Heart right ventricle (tissue), 16 donors: ENCODE measurements at regions of chrX and their contacts with region 1.

Region 1: GRCh38 chrX:140918407-140919038 is 83.9 kb upstream of the SPANXB1 start:
- DNase-seq: peak in 1 of 2 donors; percentile 4
- ATAC-seq: no peak
- H3K4me3 ChIP-seq: no peak overlapping the region
- H3K27ac ChIP-seq: no peak overlapping the region
- H3K4me1 ChIP-seq: no peaks in the 10 kb centered on the region
- H3K27me3 ChIP-seq: no peaks in the 10 kb centered on the region
- CTCF ChIP-seq: peak in 7 of 9 donors; percentile 41 to 56 (median 46)

Region 2: GRCh38 chrX:140672895-140673731 is 245.4 kb before region 1 on chrX:
- intact Hi-C with region 1: no loop called
- DNase-seq: no peak
- ATAC-seq: no peak
- H3K4me3 ChIP-seq: no peak overlapping the region
- H3K27ac ChIP-seq: no peak overlapping the region
- H3K4me1 ChIP-seq: no peaks in the 10 kb centered on the region
- H3K27me3 ChIP-seq: peaks cover 0 to 10% (median 0%) of the 10 kb centered on the region in 7 donors
- CTCF ChIP-seq: no peak

Region 3: DNA sequence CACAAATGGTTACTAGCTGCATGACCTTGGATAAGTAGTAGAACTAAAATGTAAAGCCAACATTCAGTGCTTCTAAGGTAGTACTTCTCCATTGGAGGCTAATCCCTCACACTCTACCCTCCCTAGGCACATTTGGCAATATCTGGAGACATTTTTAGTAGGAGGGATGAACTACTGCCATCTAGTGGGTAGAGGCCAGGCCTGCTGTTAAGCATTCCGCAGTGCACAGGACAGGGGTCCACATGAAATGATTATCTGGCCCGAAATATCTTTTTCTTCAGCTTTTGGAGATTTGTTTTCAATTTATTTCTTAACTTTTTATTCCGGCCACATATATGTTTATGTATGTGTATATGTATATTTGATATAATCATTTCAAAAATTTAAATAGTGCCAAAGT is 359.8 kb after region 1 on chrX:
- intact Hi-C with region 1: loop called in 1 of 10 experiments (anchors 5 kb)
- DNase-seq: no peak
- ATAC-seq: no peak
- H3K4me3 ChIP-seq: no peak overlapping the region
- H3K27ac ChIP-seq: no peak overlapping the region
- H3K4me1 ChIP-seq: no peaks in the 10 kb centered on the region
- H3K27me3 ChIP-seq: no peaks in the 10 kb centered on the region
- CTCF ChIP-seq: peak in 7 of 9 donors; percentile 31 to 57 (median 42)